CD14-positive monocyte (primary cell): ENCODE measurements at regions of chr5 and their contacts with region 1.

Region 1: GRCh38 chr5:111092062-111092853 is at the start of gene WDR36:
- DNase-seq: peak; percentile 82 to 88 (median 85)
- H3K4me3 ChIP-seq: peak within 1 kb of the TSS; percentile 65 to 94 (median 91)
- H3K4me3 Mint-ChIP-seq: peak within 1 kb of the TSS; percentile 94 to 98
- H3K27ac ChIP-seq: peak within 1 kb of the TSS; percentile 73 to 83
- H3K27ac Mint-ChIP-seq: peak within 1 kb of the TSS; percentile 92 to 98 (median 96)
- H3K4me1 ChIP-seq: peaks cover 23 to 31% of the 10 kb centered on the region in 2 donors
- H3K4me1 Mint-ChIP-seq: peaks cover 26% of the 10 kb centered on the region
- H3K27me3 ChIP-seq: no peaks in the 10 kb centered on the region
- H3K27me3 Mint-ChIP-seq: peaks cover 0 to 2% (median 0%) of the 10 kb centered on the region in 3 donors
- CTCF ChIP-seq: no peak
- polyA plus RNA-seq, gene WDR36: 7.2 to 8.7 (median 8.2) TPM

Region 2: DNA sequence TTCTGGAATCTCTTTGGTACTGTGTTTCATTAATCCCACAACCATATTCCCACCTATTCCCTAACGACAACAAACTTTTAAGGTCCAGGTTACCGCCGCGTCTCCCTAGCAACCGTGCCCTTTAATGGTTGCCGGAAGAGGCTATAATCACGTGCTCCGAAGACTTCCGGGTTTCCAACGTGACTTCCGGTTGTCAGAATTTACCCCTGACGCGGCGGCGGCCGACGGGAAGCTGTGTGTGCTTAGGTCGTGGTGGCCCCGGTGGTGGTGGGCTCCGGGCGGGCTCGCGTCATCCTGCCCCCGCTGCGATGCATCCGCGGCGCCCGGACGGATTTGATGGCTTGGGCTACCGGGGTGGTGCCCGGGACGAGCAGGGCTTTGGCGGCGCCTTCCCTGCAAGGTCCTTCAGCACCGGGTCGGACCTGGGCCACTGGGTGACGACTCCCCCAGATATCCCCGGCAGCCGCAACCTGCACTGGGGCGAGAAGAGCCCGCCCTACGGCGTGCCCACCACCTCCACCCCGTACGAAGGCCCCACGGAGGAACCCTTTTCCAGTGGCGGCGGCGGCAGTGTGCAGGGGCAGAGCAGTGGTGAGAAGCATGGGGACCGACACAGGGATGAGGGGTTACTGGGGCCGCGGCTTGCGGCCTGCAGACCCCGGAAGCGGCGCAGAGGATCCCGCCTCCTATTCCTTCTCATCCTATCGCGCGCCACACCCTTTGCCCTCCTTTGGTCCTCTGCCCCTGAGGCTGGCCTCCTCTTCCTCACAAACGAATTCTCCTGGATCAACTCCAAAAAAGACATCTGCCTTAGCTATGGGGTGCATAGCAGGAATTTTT is 353.2 kb before region 1 on chr5 and contains the start of gene SLC25A46:
- intact Hi-C with region 1: loop called in 1 of 2 experiments (anchors 10 kb)
- DNase-seq: peak; percentile 86 to 93 (median 91)
- H3K4me3 ChIP-seq: peak within 1 kb of the TSS; percentile 72 to 89 (median 76)
- H3K4me3 Mint-ChIP-seq: peak within 1 kb of the TSS; percentile 97 to 98
- H3K27ac ChIP-seq: peak within 1 kb of the TSS; percentile 68 to 94
- H3K27ac Mint-ChIP-seq: peak within 1 kb of the TSS; percentile 87 to 97 (median 93)
- H3K4me1 ChIP-seq: peaks cover 14 to 17% of the 10 kb centered on the region in 2 donors
- H3K4me1 Mint-ChIP-seq: peaks cover 28% of the 10 kb centered on the region
- H3K27me3 ChIP-seq: peaks cover 0 to 2% of the 10 kb centered on the region in 2 donors
- H3K27me3 Mint-ChIP-seq: peaks cover 4 to 10% (median 7%) of the 10 kb centered on the region in 3 donors
- CTCF ChIP-seq: no peak
- polyA plus RNA-seq, gene SLC25A46: 20.1 to 32.2 (median 29.7) TPM

Region 3: DNA sequence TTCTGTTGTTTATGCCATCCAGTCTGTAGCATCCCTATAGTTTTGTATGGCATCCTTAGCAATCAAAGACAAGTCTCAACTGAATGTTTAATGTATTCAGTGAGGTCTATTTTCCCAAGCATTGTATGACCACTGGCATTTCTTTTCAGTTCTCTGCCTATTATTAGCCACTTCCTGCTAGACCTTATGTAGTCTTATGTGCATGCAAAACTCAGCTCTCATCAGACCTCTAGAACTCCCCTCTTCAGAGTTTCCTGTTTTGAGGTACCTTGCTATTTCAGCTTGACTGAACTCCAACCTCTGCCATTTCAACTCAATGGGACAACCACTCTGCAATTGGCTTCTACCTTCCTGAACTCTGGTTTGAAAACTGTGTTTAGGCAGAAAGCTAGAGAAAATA is 240.2 kb before region 1 on chr5:
- intact Hi-C with region 1: no loop called
- DNase-seq: no peak
- H3K4me3 ChIP-seq: no peak overlapping the region
- H3K4me3 Mint-ChIP-seq: no peak overlapping the region
- H3K27ac ChIP-seq: no peak overlapping the region
- H3K27ac Mint-ChIP-seq: no peak overlapping the region
- H3K4me1 ChIP-seq: no peaks in the 10 kb centered on the region
- H3K4me1 Mint-ChIP-seq: no peaks in the 10 kb centered on the region
- H3K27me3 ChIP-seq: no peaks in the 10 kb centered on the region
- H3K27me3 Mint-ChIP-seq: no peaks in the 10 kb centered on the region
- CTCF ChIP-seq: no peak

Region 4: DNA sequence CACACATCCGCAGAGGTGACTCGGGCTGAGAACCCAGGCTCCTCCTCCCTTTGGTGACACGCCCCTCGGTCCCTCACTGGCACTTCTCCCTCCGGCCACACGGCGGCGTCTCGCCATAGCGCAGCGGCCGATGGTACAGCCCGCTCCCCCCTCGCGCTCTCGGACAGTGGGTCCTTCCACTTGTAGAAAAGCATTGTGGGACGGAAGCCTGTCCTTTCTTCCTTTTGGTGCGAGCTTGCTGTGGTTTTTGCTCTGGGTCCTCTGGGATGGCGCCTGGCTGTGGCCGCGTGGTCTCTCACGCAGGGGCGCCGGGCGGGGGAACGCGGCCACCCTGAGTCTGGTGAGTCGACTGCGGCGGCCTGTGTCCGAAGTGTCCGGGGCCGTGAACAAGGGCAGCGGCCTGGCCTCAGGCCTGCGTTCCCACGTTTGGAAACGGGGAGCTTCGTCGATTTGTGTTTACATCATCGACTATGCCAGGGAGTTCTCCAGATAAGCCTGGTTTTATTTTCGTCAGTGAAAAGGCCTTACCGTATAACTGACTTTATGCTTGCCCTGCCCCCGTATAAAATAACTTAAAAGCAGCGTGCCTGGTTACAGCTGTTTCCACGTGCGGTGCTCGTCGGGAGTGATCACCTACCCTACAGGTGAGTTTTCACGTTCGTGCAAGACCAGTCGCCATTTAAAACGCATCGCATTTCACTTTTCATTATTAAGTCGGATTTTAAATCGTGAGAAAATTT is 1068.6 kb after region 1 on chr5:
- intact Hi-C with region 1: loop called in 1 of 2 experiments (anchors 10 kb)
- DNase-seq: peak; percentile 87 to 92 (median 90)
- H3K4me3 ChIP-seq: peak overlapping the region; percentile 78 to 91 (median 86)
- H3K4me3 Mint-ChIP-seq: peak overlapping the region; percentile 89 to 96
- H3K27ac ChIP-seq: peak overlapping the region; percentile 54 to 87
- H3K27ac Mint-ChIP-seq: peak overlapping the region; percentile 83 to 95 (median 88)
- H3K4me1 ChIP-seq: peaks cover 13 to 18% of the 10 kb centered on the region in 2 donors
- H3K4me1 Mint-ChIP-seq: peaks cover 18% of the 10 kb centered on the region
- H3K27me3 ChIP-seq: no peaks in the 10 kb centered on the region
- H3K27me3 Mint-ChIP-seq: peaks cover 2 to 5% (median 3%) of the 10 kb centered on the region in 3 donors
- CTCF ChIP-seq: peak; percentile 98